CD8-positive, alpha-beta T cell (primary cell): ENCODE measurements at regions of chr18 and their contacts with region 1.

Region 1: GRCh38 chr18:35616664-35617423 is 35.3 kb downstream of the GALNT1 start:
- DNase-seq: peak; percentile 10 to 82 (median 62)
- ATAC-seq: peak; percentile 92
- H3K4me3 ChIP-seq: peak overlapping the region in 1 of 2 experiments; percentile 10
- H3K4me3 Mint-ChIP-seq: no peak overlapping the region
- H3K27ac ChIP-seq: peak overlapping the region; percentile 27 to 76
- H3K27ac Mint-ChIP-seq: no peak overlapping the region
- H3K4me1 ChIP-seq: peaks cover 19% of the 10 kb centered on the region
- H3K4me1 Mint-ChIP-seq: peaks cover 20% of the 10 kb centered on the region
- H3K27me3 ChIP-seq: no peaks in the 10 kb centered on the region
- H3K27me3 Mint-ChIP-seq: no peaks in the 10 kb centered on the region
- CTCF ChIP-seq: no peak

Region 2: GRCh38 chr18:35592298-35592697 is 24.5 kb before region 1 on chr18:
- CTCF ChIA-PET with region 1: no interaction called
- POLR2A ChIA-PET with region 1: no interaction called
- intact Hi-C with region 1: loop called in 1 of 2 experiments (anchors 2 kb)
- DNase-seq: no peak
- ATAC-seq: no peak
- H3K4me3 ChIP-seq: no peak overlapping the region
- H3K4me3 Mint-ChIP-seq: no peak overlapping the region
- H3K27ac ChIP-seq: no peak overlapping the region
- H3K27ac Mint-ChIP-seq: no peak overlapping the region
- H3K4me1 ChIP-seq: peaks cover 4% of the 10 kb centered on the region
- H3K4me1 Mint-ChIP-seq: peaks cover 45% of the 10 kb centered on the region
- H3K27me3 ChIP-seq: no peaks in the 10 kb centered on the region
- H3K27me3 Mint-ChIP-seq: no peaks in the 10 kb centered on the region
- CTCF ChIP-seq: no peak

Region 3: GRCh38 chr18:35661483-35662146 is 44.8 kb after region 1 on chr18:
- CTCF ChIA-PET with region 1: no interaction called
- POLR2A ChIA-PET with region 1: no interaction called
- intact Hi-C with region 1: loop called in 1 of 2 experiments (anchors 5 kb)
- DNase-seq: no peak
- ATAC-seq: no peak
- H3K4me3 ChIP-seq: no peak overlapping the region
- H3K4me3 Mint-ChIP-seq: no peak overlapping the region
- H3K27ac ChIP-seq: no peak overlapping the region
- H3K27ac Mint-ChIP-seq: no peak overlapping the region
- H3K4me1 ChIP-seq: no peaks in the 10 kb centered on the region
- H3K4me1 Mint-ChIP-seq: no peaks in the 10 kb centered on the region
- H3K27me3 ChIP-seq: no peaks in the 10 kb centered on the region
- H3K27me3 Mint-ChIP-seq: no peaks in the 10 kb centered on the region
- CTCF ChIP-seq: no peak

Region 4: DNA sequence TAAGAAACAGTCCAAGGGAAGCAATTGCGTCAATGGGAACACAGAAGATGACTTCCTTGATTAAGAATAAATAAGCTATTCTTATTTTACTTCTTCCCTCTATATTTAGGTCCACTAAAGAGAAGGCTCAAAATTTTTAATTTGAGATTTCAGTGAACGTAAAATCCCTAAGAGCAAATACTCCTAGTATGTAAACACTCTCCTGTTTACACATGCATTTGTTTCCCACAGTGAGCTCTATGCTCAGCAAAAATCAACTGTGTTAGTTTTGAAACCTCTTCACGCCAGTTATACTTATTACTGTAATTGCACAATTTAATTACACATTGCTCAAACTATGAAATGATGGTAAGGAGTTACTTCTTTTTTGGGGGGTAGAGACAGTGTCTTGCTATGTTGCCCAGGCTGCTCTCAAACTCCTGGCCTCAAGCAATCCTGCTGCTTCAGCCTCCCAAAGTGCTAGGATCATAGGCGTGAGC is 503.5 kb after region 1 on chr18:
- CTCF ChIA-PET with region 1: no interaction called
- POLR2A ChIA-PET with region 1: no interaction called
- intact Hi-C with region 1: no loop called
- DNase-seq: no peak
- ATAC-seq: no peak
- H3K4me3 ChIP-seq: no peak overlapping the region
- H3K4me3 Mint-ChIP-seq: no peak overlapping the region
- H3K27ac ChIP-seq: no peak overlapping the region
- H3K27ac Mint-ChIP-seq: no peak overlapping the region
- H3K4me1 ChIP-seq: no peaks in the 10 kb centered on the region
- H3K4me1 Mint-ChIP-seq: peaks cover 11% of the 10 kb centered on the region
- H3K27me3 ChIP-seq: no peaks in the 10 kb centered on the region
- H3K27me3 Mint-ChIP-seq: no peaks in the 10 kb centered on the region
- CTCF ChIP-seq: no peak

Region 5: DNA sequence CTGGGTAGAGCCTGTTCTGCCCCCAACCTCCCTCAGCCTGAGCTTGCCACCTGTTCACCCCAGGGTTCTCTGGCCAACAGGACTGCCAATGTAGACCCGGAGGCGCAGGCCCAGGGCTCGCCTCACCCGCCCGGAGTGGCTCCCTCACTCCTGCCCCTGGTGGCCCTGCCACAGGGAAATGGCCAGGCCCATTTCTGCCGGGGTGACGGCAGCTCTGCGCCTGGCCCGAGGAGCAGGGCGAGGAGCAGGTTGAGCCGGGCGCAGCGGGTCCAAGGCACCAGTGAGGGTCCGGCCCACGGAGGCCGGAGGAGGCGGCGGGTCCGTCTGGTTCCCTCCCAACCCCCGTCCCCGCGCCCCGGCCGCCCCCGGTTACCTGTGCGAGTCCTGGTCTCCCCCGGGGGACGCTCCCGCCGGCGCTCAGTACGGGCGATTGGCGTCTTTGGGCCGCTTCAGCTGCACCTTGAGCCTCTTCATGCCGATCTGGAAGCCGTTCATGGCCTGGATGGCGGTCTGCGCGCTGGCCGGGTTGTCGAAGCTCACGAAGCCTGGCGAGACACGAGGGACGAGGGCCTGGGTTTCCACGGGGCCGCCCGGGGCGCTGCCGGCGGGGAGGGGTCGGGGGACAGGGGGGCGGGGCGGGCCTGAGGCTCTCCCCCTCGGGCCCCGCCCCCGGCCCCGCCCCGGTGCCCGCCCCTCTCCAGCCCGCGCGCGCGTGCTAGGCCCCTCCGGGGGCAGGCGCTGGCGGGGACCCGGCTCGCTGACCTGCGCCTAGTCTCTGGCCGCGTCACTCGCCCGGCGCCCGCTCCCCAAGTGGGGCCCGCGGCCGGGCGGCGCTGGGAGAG is 1636.8 kb after region 1 on chr18:
- CTCF ChIA-PET with region 1: no interaction called
- POLR2A ChIA-PET with region 1: no interaction called
- intact Hi-C with region 1: no loop called
- DNase-seq: no peak
- ATAC-seq: no peak
- H3K4me3 ChIP-seq: no peak overlapping the region
- H3K4me3 Mint-ChIP-seq: no peak overlapping the region
- H3K27ac ChIP-seq: no peak overlapping the region
- H3K27ac Mint-ChIP-seq: no peak overlapping the region
- H3K4me1 ChIP-seq: no peaks in the 10 kb centered on the region
- H3K4me1 Mint-ChIP-seq: peaks cover 11% of the 10 kb centered on the region
- H3K27me3 ChIP-seq: peaks cover 3 to 7% of the 10 kb centered on the region in 2 experiments
- H3K27me3 Mint-ChIP-seq: peaks cover 52% of the 10 kb centered on the region
- CTCF ChIP-seq: no peak